ENCODE measurements at regions of chr1 and their contacts with region 1.

Region 1: DNA sequence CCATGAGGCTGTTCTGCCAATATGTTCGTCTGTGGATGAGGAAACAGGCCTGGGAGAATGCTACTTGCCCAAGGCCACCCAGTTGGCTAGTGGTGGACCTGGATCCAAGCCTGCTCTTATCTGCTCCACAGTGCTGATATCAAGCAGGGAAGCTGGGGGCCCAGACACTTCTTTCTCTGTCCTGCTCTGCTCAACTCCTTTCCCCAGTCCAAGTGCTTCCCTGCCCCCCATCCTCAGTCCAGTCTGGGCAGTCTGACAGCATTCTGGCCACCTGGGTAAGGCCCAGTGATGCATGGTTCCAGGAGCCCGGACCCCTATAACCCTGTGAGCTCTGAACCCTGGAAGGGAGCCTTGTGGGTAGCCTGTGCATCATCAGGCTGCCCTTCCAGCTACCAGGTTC is 4.2 kb upstream of the PAQR7 start:
- DNase-seq: peak; percentile 68

Region 2: GRCh38 chr1:24080131-24080530 is 1799.5 kb before region 1 on chr1:
- intact Hi-C with region 1: loop called in 1 of 2 experiments (anchors 5 kb)
- DNase-seq: no peak